A673 (cell line): ENCODE measurements at regions of chr19 and their contacts with region 1.

Region 1: DNA sequence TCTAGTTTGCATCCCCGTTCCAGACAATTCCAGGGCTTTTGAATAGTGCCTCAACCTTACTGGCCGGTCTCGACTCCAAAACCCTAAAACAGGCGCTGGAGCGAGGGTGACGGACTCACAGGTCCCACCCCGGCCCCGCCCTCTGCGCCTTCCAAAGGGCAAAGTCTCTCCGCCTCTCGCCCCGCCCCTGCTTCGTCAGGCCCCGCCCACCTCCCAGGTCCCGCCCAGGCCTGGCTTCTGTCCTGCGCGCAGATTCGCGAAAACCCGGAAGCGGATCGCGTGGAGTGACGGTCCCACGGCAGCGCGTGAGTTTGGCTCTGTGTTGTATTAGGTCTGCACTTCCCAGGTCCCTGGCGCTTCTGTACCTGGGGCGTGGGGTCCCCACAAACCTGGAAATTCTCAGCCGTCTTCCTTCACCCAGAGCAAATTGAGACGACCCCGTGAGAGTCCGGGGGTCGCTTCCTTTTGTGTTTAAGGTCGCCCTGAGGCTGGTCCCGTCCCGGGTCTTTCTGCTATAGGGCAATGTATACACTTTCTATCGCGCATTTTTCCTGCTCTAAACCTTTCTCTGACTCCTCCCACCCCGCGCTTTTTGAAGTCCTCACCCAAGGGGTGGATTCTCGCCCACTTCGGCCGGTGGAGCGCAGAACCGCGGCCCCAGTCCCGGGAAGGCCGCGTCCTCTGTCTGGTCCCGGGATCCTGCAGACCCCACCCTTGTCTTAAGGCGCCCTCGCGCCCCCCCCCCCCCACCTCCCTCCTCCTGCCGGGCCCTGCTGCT is at the start of gene ZNF813:
- DNase-seq: peak; percentile 92
- H3K4me3 ChIP-seq: peak within 1 kb of the TSS; percentile 81
- H3K27ac ChIP-seq: peak within 1 kb of the TSS; percentile 71
- H3K4me1 ChIP-seq: no peaks in the 10 kb centered on the region
- H3K27me3 ChIP-seq: no peaks in the 10 kb centered on the region
- CTCF ChIP-seq: no peak
- total RNA-seq, gene ZNF813: 5.6 and 8.0 TPM in 2 replicates

Region 2: DNA sequence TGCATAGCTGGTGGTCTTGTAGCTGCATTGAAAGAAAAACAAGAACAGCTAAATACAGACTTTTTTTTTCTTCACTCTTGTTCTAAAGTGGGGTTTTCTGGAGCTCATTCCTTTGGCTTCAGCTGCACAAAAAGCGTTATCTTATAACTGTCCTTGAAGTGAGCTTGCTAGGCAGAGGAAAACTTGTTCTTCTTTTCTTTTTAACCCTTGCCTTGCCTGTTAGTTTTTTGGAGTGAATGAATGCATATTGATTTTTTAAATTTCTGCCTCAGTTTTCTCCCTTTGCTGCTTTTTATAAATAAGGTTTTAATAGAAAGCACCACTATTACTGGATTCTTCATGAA is 71.2 kb before region 1 on chr19:
- CTCF ChIA-PET with region 1: no interaction called
- POLR2A ChIA-PET with region 1: no interaction called
- intact Hi-C with region 1: loop called (anchors 2 kb)
- DNase-seq: no peak
- H3K4me3 ChIP-seq: peak overlapping the region; percentile 91
- H3K27ac ChIP-seq: no peak overlapping the region
- H3K4me1 ChIP-seq: no peaks in the 10 kb centered on the region
- H3K27me3 ChIP-seq: no peaks in the 10 kb centered on the region
- CTCF ChIP-seq: no peak